ENCODE measurements at regions of chr20 and their contacts with region 1.

Region 1: DNA sequence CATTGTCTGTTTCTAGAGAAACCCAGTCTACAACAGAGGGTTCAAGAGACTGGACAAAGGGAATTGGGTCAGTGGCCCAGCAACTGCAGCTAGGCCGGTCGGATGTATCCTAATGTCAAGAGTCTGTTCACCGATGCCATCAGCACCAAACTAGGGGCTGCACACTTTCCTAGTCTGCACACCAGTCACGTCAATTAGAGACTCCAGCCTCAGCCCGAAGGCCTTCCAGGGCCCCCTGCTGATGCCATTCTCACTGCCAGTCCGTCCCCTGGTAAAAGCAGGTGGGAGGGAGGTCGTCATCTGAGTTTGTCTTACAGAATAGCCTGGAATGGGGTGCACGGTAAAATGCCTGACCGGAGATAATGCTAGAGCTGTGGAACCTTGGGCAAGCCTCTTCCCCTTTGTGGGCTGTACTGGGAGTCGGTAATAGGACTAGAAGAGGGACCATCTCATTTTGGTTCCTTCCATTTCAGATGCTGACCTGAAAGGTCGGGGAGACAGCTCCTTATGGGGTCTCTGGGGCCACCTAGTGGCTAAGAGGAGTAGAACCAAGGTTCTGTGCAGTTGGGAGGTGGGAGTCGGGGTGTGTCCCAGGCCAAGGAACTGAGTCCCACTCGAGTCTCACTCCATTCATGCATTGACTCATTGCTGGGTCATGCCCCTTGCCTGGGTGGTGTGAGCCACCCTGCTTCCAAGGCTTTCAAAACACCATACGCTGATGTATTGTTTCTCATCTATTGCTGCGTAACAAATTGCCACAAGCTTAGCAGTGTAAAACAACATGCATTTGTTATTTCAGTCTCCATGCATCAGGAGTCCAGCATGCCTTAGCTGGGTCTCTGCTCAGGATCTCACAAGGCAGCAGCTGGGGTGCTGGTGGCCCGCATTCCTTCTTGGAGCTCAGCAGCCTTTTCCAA is 5.1 kb downstream of the SOX12 start:
- DNase-seq: peak in 4 of 5 donors; percentile 47 to 57 (median 49)
- ATAC-seq: peak; percentile 5 to 22 (median 14)
- H3K4me3 ChIP-seq: no peak overlapping the region
- H3K27ac ChIP-seq: peak overlapping the region in 2 of 12 donors; percentile 5 to 94
- H3K4me1 ChIP-seq: peaks cover 0 to 37% (median 17%) of the 10 kb centered on the region in 12 donors
- H3K27me3 ChIP-seq: peaks cover 0 to 5% (median 0%) of the 10 kb centered on the region in 9 donors
- CTCF ChIP-seq: peak; percentile 76 to 90 (median 86)
- POLR2A ChIP-seq: no peak

Region 2: GRCh38 chr20:208942-209566 is 121.4 kb before region 1 on chr20:
- intact Hi-C with region 1: loop called in 3 of 10 experiments (anchors 5 to 10 kb)
- DNase-seq: no peak
- ATAC-seq: peak in 3 of 4 donors; percentile 71 to 77 (median 76)
- H3K4me3 ChIP-seq: no peak overlapping the region
- H3K27ac ChIP-seq: no peak overlapping the region
- H3K4me1 ChIP-seq: peaks cover 0 to 8% (median 0%) of the 10 kb centered on the region in 12 donors
- H3K27me3 ChIP-seq: no peaks in the 10 kb centered on the region
- CTCF ChIP-seq: peak; percentile 15 to 67 (median 50)
- POLR2A ChIP-seq: no peak

Region 3: DNA sequence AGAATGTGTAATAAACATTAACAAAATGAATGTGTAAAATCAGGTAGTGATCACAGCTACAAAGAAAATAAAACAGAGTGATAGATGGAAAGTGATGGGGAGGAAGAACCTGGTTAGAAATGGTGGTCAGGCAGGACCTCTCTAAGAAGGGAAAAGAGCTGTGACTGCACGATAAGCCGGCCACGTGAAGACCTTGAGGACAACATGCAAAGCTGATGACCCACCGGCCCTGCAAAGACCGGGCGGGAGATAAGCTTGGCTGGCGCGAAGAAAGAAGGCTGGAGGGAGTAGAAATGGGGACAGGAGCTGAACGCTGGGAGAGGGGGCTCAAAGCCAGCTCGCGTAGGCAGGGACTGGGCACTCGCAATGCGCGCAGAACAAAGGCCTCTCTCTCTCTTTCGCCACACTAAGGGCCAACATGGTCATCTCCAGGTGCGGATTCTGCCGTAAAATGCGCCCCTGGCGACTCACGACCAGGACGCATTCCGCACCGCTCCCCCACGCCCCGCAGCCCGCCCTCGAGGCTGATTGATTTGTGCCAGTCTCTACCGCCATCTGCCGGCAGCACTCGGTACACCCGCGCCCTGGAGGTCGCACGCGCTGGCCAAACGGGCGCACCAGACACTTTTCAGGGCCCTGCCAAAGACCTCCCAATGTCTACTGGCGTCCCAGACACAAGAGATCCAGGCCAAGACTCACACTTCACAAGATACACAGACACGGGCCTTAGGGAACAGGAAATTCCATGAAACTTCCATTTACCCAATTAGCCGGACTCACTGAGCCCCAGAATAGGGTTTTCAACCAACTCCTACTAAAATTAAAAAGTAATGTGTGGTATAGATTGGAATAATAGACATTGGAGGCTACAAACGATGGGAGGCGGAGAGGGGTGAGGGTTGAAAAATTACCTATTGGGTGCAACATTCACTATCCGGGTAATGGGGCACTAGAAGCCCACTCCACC is 63.6 kb before region 1 on chr20:
- intact Hi-C with region 1: loop called in 8 of 10 experiments (anchors 2 to 10 kb)
- DNase-seq: peak; percentile 84 to 90 (median 85)
- ATAC-seq: peak; percentile 80 to 94 (median 92)
- H3K4me3 ChIP-seq: peak overlapping the region; percentile 15 to 61 (median 54)
- H3K27ac ChIP-seq: peak overlapping the region in 2 of 12 donors; percentile 5 to 39
- H3K4me1 ChIP-seq: peaks cover 0 to 10% (median 0%) of the 10 kb centered on the region in 12 donors
- H3K27me3 ChIP-seq: no peaks in the 10 kb centered on the region
- CTCF ChIP-seq: peak; percentile 91 to 99 (median 97)
- POLR2A ChIP-seq: no peak

Region 4: GRCh38 chr20:278607-279571 is 51.6 kb before region 1 on chr20:
- intact Hi-C with region 1: loop called in 7 of 10 experiments (anchors 5 to 10 kb)
- DNase-seq: peak in 3 of 5 donors; percentile 61 to 68 (median 65)
- ATAC-seq: peak in 3 of 4 donors; percentile 15 to 70 (median 47)
- H3K4me3 ChIP-seq: peak overlapping the region in 8 of 12 donors; percentile 23 to 45 (median 32)
- H3K27ac ChIP-seq: peak overlapping the region in 4 of 12 donors; percentile 10 to 37 (median 28)
- H3K4me1 ChIP-seq: no peaks in the 10 kb centered on the region
- H3K27me3 ChIP-seq: no peaks in the 10 kb centered on the region
- CTCF ChIP-seq: peak in 4 of 12 donors; percentile 7 to 21 (median 10)
- POLR2A ChIP-seq: no peak

Region 5: GRCh38 chr20:297098-297924 is 33.2 kb before region 1 on chr20 and contains the start of gene ZCCHC3:
- intact Hi-C with region 1: loop called in 4 of 10 experiments (anchors 1 to 5 kb)
- DNase-seq: peak; percentile 86 to 92 (median 90)
- ATAC-seq: peak; percentile 83 to 93 (median 90)
- H3K4me3 ChIP-seq: peak within 1 kb of the TSS; percentile 66 to 99 (median 87)
- H3K27ac ChIP-seq: peak within 1 kb of the TSS; percentile 96 to 100 (median 99)
- H3K4me1 ChIP-seq: peaks cover 13 to 53% (median 36%) of the 10 kb centered on the region in 12 donors
- H3K27me3 ChIP-seq: no peaks in the 10 kb centered on the region
- CTCF ChIP-seq: peak in 5 of 12 donors; percentile 15 to 43 (median 27)
- POLR2A ChIP-seq: peak in 1 of 2 donors; percentile 28
- total RNA-seq, gene ZCCHC3: 6.9 to 15.3 (median 11.4) TPM

Region 6: GRCh38 chr20:391041-391711 is 60.7 kb after region 1 on chr20:
- intact Hi-C with region 1: no loop called
- DNase-seq: no peak
- ATAC-seq: peak in 2 of 4 donors; percentile 10 to 19
- H3K4me3 ChIP-seq: no peak overlapping the region
- H3K27ac ChIP-seq: no peak overlapping the region
- H3K4me1 ChIP-seq: no peaks in the 10 kb centered on the region
- H3K27me3 ChIP-seq: no peaks in the 10 kb centered on the region
- CTCF ChIP-seq: no peak
- POLR2A ChIP-seq: no peak

Region 7: GRCh38 chr20:588932-589672 is 258.6 kb after region 1 on chr20:
- intact Hi-C with region 1: no loop called
- DNase-seq: no peak
- ATAC-seq: peak in 3 of 4 donors; percentile 9 to 46 (median 38)
- H3K4me3 ChIP-seq: no peak overlapping the region
- H3K27ac ChIP-seq: peak overlapping the region in 11 of 12 donors; percentile 29 to 93 (median 63)
- H3K4me1 ChIP-seq: peaks cover 3 to 37% (median 18%) of the 10 kb centered on the region in 12 donors
- H3K27me3 ChIP-seq: no peaks in the 10 kb centered on the region
- CTCF ChIP-seq: peak in 2 of 12 donors; percentile 7 to 8
- POLR2A ChIP-seq: no peak